Activated B cell treated with CpG ODN at 0.5 μM for 24 hours (primary cell): ENCODE measurements at regions of chr11 and their contacts with region 1.

Region 1: DNA sequence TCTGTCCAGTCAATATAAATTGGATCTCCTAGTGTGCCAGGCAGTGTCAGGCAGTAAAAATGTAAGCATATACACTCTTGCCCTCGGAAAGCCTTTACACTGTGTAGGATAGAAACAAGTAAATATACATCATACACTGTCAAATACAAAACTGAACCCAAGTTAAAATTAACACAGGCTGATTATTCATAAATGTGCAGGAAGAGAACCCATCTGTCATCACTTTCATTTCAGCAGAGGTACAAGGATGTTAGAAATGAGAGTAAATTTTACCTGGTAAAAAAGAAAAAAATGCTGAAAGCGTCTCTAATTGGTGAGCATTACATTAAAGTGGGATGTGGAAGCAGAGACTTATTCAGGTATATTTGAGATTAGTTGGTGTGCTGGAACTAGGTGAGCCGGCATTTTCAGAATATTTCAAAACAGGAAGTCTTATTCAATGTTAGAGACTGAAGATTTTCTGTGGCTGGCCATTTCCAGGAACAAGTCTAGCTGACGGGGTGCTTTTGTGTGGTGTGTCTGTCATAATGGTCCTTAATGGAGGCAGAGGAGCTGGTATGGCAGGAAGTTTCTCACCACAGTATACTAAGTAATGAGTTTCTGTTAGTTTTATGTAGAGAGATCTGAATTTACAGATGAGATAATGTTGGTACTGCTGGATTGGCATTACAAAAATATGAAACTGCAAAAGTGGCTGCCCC is 192.6 kb downstream of the CASP12 start:
- DNase-seq: no peak
- ATAC-seq: peak; percentile 94
- H3K4me3 Mint-ChIP-seq: peak overlapping the region; percentile 76
- H3K27ac Mint-ChIP-seq: peak overlapping the region; percentile 92
- H3K4me1 Mint-ChIP-seq: peaks cover 27% of the 10 kb centered on the region
- H3K27me3 Mint-ChIP-seq: no peaks in the 10 kb centered on the region
- CTCF ChIP-seq: no peak

Region 2: GRCh38 chr11:104758032-104758431 is 52.4 kb after region 1 on chr11:
- CTCF ChIA-PET with region 1: no interaction called
- POLR2A ChIA-PET with region 1: no interaction called
- intact Hi-C with region 1: no loop called
- DNase-seq: no peak
- ATAC-seq: no peak
- H3K4me3 Mint-ChIP-seq: no peak overlapping the region
- H3K27ac Mint-ChIP-seq: no peak overlapping the region
- H3K4me1 Mint-ChIP-seq: no peaks in the 10 kb centered on the region
- H3K27me3 Mint-ChIP-seq: no peaks in the 10 kb centered on the region
- CTCF ChIP-seq: no peak

Region 3: GRCh38 chr11:104799251-104799650 is 93.6 kb after region 1 on chr11:
- CTCF ChIA-PET with region 1: no interaction called
- POLR2A ChIA-PET with region 1: no interaction called
- intact Hi-C with region 1: loop called (anchors 2 kb)
- DNase-seq: no peak
- ATAC-seq: peak; percentile 57
- H3K4me3 Mint-ChIP-seq: peak overlapping the region; percentile 74
- H3K27ac Mint-ChIP-seq: peak overlapping the region; percentile 91
- H3K4me1 Mint-ChIP-seq: peaks cover 30% of the 10 kb centered on the region
- H3K27me3 Mint-ChIP-seq: no peaks in the 10 kb centered on the region
- CTCF ChIP-seq: no peak

Region 4: DNA sequence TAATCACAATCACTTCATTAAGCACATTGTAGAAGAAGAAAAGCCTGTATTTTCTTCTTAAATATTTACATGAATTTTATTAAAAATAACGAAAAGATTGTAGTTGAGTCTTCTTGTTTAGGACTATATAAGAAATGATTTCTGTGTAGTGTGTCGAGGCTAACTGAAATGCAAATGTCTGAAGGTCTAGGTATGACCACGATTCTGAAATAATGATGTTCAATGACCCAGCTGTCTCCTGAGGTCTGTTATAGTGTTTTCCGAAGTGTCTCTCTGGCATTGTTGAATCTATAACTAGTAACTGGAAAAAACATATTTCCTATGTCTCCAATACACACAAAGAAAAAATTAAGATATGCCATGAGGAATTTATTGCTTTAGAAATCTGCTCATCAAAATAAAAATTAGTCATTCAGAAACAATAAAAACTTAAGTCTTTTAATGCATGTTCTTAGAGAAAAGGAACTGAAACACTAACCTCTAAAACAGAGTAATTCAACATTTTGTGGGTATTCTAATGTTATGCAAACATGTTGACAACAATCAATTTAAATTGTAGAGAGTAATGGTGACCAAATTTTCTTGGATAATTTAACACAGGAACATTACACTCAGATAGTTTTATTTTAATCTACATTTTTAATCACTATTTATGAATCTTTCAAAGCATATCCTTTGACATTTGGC is 137.7 kb after region 1 on chr11:
- CTCF ChIA-PET with region 1: no interaction called
- POLR2A ChIA-PET with region 1: no interaction called
- intact Hi-C with region 1: loop called (anchors 2 kb)
- DNase-seq: no peak
- ATAC-seq: peak; percentile 20
- H3K4me3 Mint-ChIP-seq: no peak overlapping the region
- H3K27ac Mint-ChIP-seq: no peak overlapping the region
- H3K4me1 Mint-ChIP-seq: peaks cover 17% of the 10 kb centered on the region
- H3K27me3 Mint-ChIP-seq: no peaks in the 10 kb centered on the region
- CTCF ChIP-seq: no peak

Region 5: GRCh38 chr11:104858882-104859775 is 153.5 kb after region 1 on chr11:
- CTCF ChIA-PET with region 1: no interaction called
- POLR2A ChIA-PET with region 1: no interaction called
- intact Hi-C with region 1: loop called (anchors 5 kb)
- DNase-seq: peak; percentile 18
- ATAC-seq: peak; percentile 92
- H3K4me3 Mint-ChIP-seq: peak overlapping the region; percentile 68
- H3K27ac Mint-ChIP-seq: peak overlapping the region; percentile 87
- H3K4me1 Mint-ChIP-seq: peaks cover 34% of the 10 kb centered on the region
- H3K27me3 Mint-ChIP-seq: no peaks in the 10 kb centered on the region
- CTCF ChIP-seq: no peak

Region 6: GRCh38 chr11:104968355-104968855 is 262.8 kb after region 1 on chr11 and contains the start of gene CASP4:
- CTCF ChIA-PET with region 1: no interaction called
- POLR2A ChIA-PET with region 1: no interaction called
- intact Hi-C with region 1: loop called (anchors 5 kb)
- DNase-seq: no peak
- ATAC-seq: peak; percentile 85
- H3K4me3 Mint-ChIP-seq: peak within 1 kb of the TSS; percentile 94
- H3K27ac Mint-ChIP-seq: peak within 1 kb of the TSS; percentile 94
- H3K4me1 Mint-ChIP-seq: peaks cover 41% of the 10 kb centered on the region
- H3K27me3 Mint-ChIP-seq: no peaks in the 10 kb centered on the region
- CTCF ChIP-seq: no peak
- total RNA-seq, gene CASP4: 87.8 and 88.7 TPM in 2 replicates

Region 7: GRCh38 chr11:106021967-106022794 is 1316.5 kb after region 1 on chr11 and contains the start of gene MSANTD4:
- CTCF ChIA-PET with region 1: no interaction called
- POLR2A ChIA-PET with region 1: no interaction called
- intact Hi-C with region 1: loop called (anchors 10 kb)
- DNase-seq: peak; percentile 90
- ATAC-seq: peak; percentile 96
- H3K4me3 Mint-ChIP-seq: peak within 1 kb of the TSS; percentile 98
- H3K27ac Mint-ChIP-seq: peak within 1 kb of the TSS; percentile 92
- H3K4me1 Mint-ChIP-seq: peaks cover 43% of the 10 kb centered on the region
- H3K27me3 Mint-ChIP-seq: peaks cover 2% of the 10 kb centered on the region
- CTCF ChIP-seq: no peak
- total RNA-seq, gene MSANTD4: 17.4 and 18.9 TPM in 2 replicates